ENCODE measurements at regions of chr12 and their contacts with region 1.

Region 1: DNA sequence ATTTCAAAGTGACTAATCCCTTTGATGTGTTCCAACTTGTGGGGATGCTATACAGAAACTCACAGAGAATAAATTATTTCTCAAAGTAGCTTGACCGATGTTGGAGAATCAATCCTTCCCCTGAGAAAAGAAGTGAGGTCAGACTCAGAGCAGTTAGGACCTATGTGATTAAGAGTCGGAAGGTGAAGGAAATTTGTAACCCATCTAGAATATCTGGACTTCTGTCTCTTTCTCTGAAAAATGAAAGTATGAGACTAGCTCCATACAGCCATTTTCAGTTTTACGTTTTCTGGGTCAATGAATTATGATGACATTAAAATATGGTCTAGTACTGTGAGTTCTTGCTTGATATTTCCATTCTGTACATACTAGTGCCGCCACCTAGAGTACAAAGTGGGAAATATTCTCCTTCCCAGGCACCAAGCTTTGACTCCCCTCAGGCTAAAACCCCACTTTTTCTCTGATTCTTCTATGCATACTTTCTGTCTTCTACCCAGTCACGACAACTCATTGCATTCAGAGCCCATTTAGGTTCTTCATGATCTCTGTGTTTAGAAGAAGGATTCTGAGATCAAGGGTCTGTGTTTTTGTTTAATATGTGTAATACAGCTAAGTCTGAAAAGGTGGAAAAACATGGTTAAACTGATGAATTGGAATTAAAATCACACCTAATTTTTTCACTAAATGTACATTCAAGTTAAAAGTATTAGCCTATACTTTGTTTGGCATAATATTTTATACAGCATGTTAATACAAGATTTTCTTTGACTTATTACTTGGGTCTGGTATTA is 6.9 kb upstream of the NTS start:
- DNase-seq: no peak
- H3K4me3 ChIP-seq: no peak overlapping the region
- H3K27ac ChIP-seq: no peak overlapping the region
- H3K4me1 ChIP-seq: peaks cover 0 to 2% (median 0%) of the 10 kb centered on the region in 4 experiments; a peak in 1 of 7 replicates
- H3K27me3 ChIP-seq: no peaks in the 10 kb centered on the region
- CTCF ChIP-seq: peak in 2 of 3 experiments; percentile 65 to 75; a peak in 3 of 4 replicates
- EP300 ChIP-seq: no peak
- POLR2A ChIP-seq: no peak
- RAD21 ChIP-seq: peak; percentile 82 to 83

Region 2: DNA sequence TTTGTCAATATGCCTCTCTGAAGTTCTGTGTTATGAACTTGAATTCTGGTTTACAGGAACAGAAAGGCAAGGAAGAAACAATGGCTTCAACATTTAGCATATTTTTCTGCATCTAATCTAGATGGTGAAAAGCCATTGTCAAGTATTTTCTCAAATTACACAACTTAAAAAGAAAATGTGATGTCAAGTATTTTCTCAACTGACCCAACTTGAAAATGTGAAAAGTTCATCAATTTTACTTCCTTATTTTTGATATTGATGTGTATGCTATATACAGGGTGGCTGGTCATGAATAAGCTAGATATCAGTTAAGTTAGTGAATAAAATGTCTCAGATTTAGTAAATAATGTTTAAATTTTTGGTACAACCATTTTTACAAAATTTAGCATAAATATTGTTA is 390.4 kb before region 1 on chr12:
- CTCF ChIA-PET with region 1: interaction called, 10 read pairs
- POLR2A ChIA-PET with region 1: no interaction called
- DNase-seq: no peak
- H3K4me3 ChIP-seq: no peak overlapping the region
- H3K27ac ChIP-seq: no peak overlapping the region
- H3K4me1 ChIP-seq: no peaks in the 10 kb centered on the region
- H3K27me3 ChIP-seq: no peaks in the 10 kb centered on the region
- CTCF ChIP-seq: no peak
- EP300 ChIP-seq: no peak
- POLR2A ChIP-seq: no peak
- RAD21 ChIP-seq: no peak

Region 3: DNA sequence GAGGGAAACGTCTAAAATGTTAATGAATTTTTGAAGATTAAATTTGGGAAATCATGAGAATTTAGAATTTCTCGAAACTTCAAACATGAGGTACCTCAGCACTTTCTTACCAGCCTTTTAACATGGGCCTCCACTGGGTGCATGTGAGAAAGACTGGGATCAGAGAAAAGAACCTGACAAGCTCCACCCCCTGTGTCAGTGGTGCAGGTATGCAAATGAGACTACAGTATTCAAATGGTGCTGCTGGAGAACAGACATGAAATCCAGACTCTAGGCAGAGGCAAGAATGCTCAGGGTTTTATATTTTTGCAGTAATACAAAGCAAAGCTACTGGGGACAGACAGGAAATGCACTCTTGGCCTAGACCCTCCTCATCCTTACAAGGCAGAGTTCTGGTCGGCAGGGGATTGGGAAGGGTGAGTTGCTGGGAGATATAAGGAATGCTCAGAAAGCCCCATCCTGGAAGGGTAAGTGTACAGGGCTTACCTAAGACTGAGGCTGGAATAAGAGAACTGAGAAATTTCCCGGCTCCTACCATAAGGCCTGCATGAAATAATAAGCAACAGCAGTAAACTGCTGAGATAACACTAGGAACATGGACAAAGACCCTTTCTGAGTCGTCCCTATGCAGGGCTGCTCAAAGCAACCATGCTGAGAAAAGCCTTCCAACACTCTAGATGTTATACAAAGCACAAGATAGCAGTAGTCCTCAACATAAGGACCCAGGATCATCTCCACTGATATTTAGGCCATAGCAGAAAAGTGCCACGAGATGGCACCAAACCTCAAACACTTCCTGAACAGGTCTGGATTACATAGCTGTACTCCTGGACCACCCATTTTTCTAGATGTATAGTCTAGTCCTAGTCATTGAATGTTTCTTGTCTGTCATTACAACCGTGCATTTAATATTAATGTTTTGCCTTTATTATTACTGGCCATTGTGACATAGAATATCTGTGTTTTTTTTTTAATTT is 291.8 kb before region 1 on chr12:
- CTCF ChIA-PET with region 1: interaction called, 45 read pairs
- POLR2A ChIA-PET with region 1: no interaction called
- DNase-seq: peak in 1 of 2 experiments; percentile 56
- H3K4me3 ChIP-seq: no peak overlapping the region
- H3K27ac ChIP-seq: no peak overlapping the region
- H3K4me1 ChIP-seq: peaks cover 0 to 6% (median 0%) of the 10 kb centered on the region in 4 experiments; a peak in 1 of 7 replicates
- H3K27me3 ChIP-seq: no peaks in the 10 kb centered on the region
- CTCF ChIP-seq: peak in 2 of 3 experiments; percentile 64 to 74; a peak in 3 of 4 replicates
- EP300 ChIP-seq: no peak
- POLR2A ChIP-seq: no peak
- RAD21 ChIP-seq: peak; percentile 84 to 85

Region 4: GRCh38 chr12:85781766-85782165 is 85.4 kb before region 1 on chr12:
- CTCF ChIA-PET with region 1: interaction called, 13 read pairs
- POLR2A ChIA-PET with region 1: no interaction called
- DNase-seq: no peak
- H3K4me3 ChIP-seq: no peak overlapping the region
- H3K27ac ChIP-seq: no peak overlapping the region
- H3K4me1 ChIP-seq: peaks cover 0 to 11% (median 1%) of the 10 kb centered on the region in 4 experiments; a peak in 1 of 7 replicates
- H3K27me3 ChIP-seq: no peaks in the 10 kb centered on the region
- CTCF ChIP-seq: no peak
- EP300 ChIP-seq: no peak
- POLR2A ChIP-seq: no peak
- RAD21 ChIP-seq: no peak

Region 5: DNA sequence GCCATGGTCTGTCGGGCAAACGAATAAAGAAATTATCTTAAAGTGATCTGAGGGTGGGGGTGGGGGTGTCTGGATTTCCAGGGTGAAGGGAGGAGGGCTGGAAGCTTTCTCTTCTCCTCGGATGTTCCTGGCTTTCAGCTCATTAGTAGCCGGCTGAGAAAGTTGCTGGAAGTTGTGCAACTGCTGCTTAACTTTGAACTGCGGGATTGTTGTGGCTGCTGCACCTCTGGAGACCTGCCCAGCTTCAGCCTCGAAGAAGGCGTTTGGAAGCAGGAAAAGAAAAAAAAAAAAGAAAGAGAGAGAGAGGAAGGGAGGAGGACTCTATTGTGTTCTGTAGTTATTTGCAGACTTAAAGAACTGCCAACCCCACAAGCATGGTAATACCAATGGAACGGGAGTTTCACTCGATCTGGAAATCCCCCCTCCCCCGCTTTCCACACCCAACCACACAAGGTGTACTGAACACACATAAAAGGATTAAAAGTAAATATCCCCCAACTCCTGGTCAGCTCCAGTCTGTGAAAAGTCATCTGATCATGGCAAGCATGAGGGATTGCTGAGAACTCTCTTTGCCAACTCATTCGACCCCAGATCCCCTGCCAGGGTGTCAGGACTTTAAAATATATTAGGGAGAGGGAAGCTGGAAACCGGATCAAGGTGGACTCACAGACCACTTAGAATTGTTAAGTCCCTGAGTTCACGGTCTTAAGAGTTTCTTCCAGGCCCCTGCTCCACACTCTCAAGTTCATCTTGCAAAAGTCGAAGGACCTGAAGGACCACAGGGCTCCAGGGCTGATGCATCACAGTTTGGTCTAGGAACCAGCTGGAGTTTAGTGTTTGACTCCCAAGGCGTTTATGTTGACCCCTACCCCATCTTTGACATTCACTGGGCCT is 30.7 kb before region 1 on chr12 and contains the start of gene RASSF9:
- CTCF ChIA-PET with region 1: interaction called, 12 read pairs
- POLR2A ChIA-PET with region 1: no interaction called
- DNase-seq: no peak
- H3K4me3 ChIP-seq: peak within 1 kb of the TSS in 1 of 4 experiments; percentile 13; a peak in 1 of 8 replicates
- H3K27ac ChIP-seq: no peak within 1 kb of the TSS
- H3K4me1 ChIP-seq: peaks cover 0 to 9% (median 2%) of the 10 kb centered on the region in 4 experiments; a peak in 5 of 7 replicates
- H3K27me3 ChIP-seq: no peaks in the 10 kb centered on the region
- CTCF ChIP-seq: no peak
- EP300 ChIP-seq: no peak
- POLR2A ChIP-seq: no peak
- RAD21 ChIP-seq: no peak
- total RNA-seq, gene RASSF9: 0.25 and 0.39 TPM in 2 replicates

Region 6: GRCh38 chr12:85883763-85884162 is 16.6 kb after region 1 on chr12:
- CTCF ChIA-PET with region 1: interaction called, 12 read pairs
- POLR2A ChIA-PET with region 1: no interaction called
- DNase-seq: no peak
- H3K4me3 ChIP-seq: no peak overlapping the region
- H3K27ac ChIP-seq: no peak overlapping the region
- H3K4me1 ChIP-seq: no peaks in the 10 kb centered on the region
- H3K27me3 ChIP-seq: no peaks in the 10 kb centered on the region
- CTCF ChIP-seq: no peak
- EP300 ChIP-seq: no peak
- POLR2A ChIP-seq: no peak
- RAD21 ChIP-seq: no peak

Measured in H1 (cell line).